HEK293 (cell line): ENCODE measurements at regions of chr21 and their contacts with region 1.

Region 1: GRCh38 chr21:34351786-34352241 is 12.0 kb upstream of the KCNE2 start:
- H3K4me3 ChIP-seq: no peak overlapping the region
- H3K27ac ChIP-seq: no peak overlapping the region
- H3K4me1 ChIP-seq: no peaks in the 10 kb centered on the region
- CTCF ChIP-seq: peak; percentile 93

Region 2: GRCh38 chr21:34100790-34101189 is 251.0 kb before region 1 on chr21:
- CTCF ChIA-PET with region 1: no interaction called
- POLR2A ChIA-PET with region 1: no interaction called
- H3K4me3 ChIP-seq: no peak overlapping the region
- H3K27ac ChIP-seq: no peak overlapping the region
- H3K4me1 ChIP-seq: no peaks in the 10 kb centered on the region
- CTCF ChIP-seq: no peak

Region 3: GRCh38 chr21:34148419-34148804 is 203.4 kb before region 1 on chr21:
- CTCF ChIA-PET with region 1: no interaction called
- POLR2A ChIA-PET with region 1: no interaction called
- H3K4me3 ChIP-seq: no peak overlapping the region
- H3K27ac ChIP-seq: no peak overlapping the region
- H3K4me1 ChIP-seq: no peaks in the 10 kb centered on the region
- CTCF ChIP-seq: no peak

Region 4: GRCh38 chr21:34202553-34203372 is 149.1 kb before region 1 on chr21:
- CTCF ChIA-PET with region 1: interaction called, 10 read pairs
- POLR2A ChIA-PET with region 1: no interaction called
- H3K4me3 ChIP-seq: no peak overlapping the region
- H3K27ac ChIP-seq: no peak overlapping the region; the same call in 1 of the 2 replicates
- H3K4me1 ChIP-seq: peaks cover 2% of the 10 kb centered on the region; the same call in 1 of the 2 replicates
- CTCF ChIP-seq: no peak

Region 5: DNA sequence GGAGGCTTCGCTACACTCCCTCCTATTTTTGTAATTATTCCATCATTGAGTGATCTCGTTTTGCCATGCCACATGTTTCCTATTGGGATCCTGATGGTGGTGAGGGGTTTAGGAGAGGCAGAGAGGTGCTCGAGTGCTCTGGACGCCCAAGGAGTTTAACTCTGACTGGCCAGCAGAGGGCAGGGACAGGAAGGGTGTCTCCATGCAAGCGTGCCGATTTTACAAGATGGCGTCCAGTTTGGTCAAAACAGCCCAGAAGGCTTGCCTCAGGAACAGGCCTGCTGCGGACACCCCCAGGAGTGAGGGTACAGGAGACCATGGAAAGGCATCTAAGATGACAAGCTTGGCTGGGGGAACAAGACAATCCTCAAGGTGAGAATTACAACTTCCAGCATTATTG is 21.8 kb before region 1 on chr21:
- CTCF ChIA-PET with region 1: interaction called, 11 read pairs
- POLR2A ChIA-PET with region 1: no interaction called
- H3K4me3 ChIP-seq: no peak overlapping the region
- H3K27ac ChIP-seq: no peak overlapping the region
- H3K4me1 ChIP-seq: no peaks in the 10 kb centered on the region
- CTCF ChIP-seq: no peak

Region 6: DNA sequence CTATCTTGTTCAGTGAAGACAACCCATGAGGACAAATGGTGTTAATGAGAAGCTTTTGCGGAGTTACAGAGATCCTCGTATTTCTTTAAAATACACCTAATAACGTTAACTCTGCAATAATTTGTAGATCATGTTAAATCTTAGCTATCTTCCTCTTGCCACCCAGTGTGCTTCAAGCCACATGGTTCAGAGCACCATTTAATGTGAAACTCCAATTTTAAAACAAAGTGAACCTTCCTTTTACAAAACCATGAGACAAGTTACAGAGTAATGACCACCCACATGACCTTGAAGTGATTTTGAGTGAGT is 10.3 kb after region 1 on chr21:
- CTCF ChIA-PET with region 1: interaction called, 26 read pairs
- POLR2A ChIA-PET with region 1: no interaction called
- H3K4me3 ChIP-seq: no peak overlapping the region
- H3K27ac ChIP-seq: no peak overlapping the region
- H3K4me1 ChIP-seq: no peaks in the 10 kb centered on the region
- CTCF ChIP-seq: no peak